Activated naive CD4-positive, alpha-beta T cell treated with anti-CD3 and anti-CD28 coated beads for 36 hours (primary cell): ENCODE measurements at regions of chr20 and their contacts with region 1.

Region 1: GRCh38 chr20:381581-382290 is 1.2 kb downstream of the TRIB3 start:
- DNase-seq: peak; percentile 81
- H3K4me3 Mint-ChIP-seq: peak overlapping the region; percentile 83
- H3K27ac Mint-ChIP-seq: peak overlapping the region; percentile 83
- H3K4me1 Mint-ChIP-seq: peaks cover 25% of the 10 kb centered on the region
- H3K27me3 Mint-ChIP-seq: no peaks in the 10 kb centered on the region

Region 2: DNA sequence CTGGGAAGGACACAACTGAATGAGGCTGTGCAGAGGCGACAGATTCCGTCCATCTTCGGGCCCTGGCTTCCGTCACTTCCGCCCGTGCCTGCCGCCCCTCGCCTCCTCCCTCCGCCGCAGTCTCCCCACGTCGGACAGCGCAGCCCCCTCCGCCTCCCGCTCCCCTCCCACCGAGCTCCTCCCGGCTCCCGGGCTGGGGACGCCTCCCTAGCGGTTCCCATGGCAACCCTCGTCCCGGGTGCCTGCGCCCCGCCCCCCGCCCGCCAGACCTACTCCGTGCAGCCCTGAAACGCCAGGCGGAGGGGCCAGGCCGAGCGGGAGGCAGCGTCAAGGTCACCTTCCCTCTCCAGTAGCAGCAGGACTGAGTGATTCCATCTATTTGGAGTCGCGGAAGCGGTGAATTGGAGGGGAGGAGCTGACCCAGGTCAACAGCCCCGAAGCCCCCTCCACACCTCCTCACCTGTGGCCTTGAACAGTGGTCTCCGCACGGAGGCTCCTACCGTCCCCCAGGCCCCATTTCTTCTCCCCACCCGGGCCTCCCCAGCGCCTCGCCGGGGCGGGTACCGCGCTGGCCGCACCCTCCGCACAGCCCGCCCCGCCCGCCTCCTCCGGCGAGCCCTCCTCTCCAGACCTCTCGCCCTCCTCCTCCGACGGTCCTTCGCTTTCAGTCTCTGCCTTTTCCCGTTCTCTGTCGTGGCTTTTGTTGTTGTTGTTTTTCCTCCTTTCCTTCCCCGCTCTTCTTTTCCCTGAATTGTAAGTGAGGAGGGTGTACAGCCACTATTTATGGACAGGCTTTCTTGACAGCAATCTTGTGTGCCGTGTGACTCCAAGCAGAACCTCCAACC is 33.9 kb before region 1 on chr20:
- CTCF ChIA-PET with region 1: no interaction called
- intact Hi-C with region 1: loop called (anchors 5 kb)
- DNase-seq: peak; percentile 57
- H3K4me3 Mint-ChIP-seq: peak overlapping the region; percentile 79
- H3K27ac Mint-ChIP-seq: no peak overlapping the region
- H3K4me1 Mint-ChIP-seq: peaks cover 9% of the 10 kb centered on the region
- H3K27me3 Mint-ChIP-seq: peaks cover 5% of the 10 kb centered on the region

Region 3: DNA sequence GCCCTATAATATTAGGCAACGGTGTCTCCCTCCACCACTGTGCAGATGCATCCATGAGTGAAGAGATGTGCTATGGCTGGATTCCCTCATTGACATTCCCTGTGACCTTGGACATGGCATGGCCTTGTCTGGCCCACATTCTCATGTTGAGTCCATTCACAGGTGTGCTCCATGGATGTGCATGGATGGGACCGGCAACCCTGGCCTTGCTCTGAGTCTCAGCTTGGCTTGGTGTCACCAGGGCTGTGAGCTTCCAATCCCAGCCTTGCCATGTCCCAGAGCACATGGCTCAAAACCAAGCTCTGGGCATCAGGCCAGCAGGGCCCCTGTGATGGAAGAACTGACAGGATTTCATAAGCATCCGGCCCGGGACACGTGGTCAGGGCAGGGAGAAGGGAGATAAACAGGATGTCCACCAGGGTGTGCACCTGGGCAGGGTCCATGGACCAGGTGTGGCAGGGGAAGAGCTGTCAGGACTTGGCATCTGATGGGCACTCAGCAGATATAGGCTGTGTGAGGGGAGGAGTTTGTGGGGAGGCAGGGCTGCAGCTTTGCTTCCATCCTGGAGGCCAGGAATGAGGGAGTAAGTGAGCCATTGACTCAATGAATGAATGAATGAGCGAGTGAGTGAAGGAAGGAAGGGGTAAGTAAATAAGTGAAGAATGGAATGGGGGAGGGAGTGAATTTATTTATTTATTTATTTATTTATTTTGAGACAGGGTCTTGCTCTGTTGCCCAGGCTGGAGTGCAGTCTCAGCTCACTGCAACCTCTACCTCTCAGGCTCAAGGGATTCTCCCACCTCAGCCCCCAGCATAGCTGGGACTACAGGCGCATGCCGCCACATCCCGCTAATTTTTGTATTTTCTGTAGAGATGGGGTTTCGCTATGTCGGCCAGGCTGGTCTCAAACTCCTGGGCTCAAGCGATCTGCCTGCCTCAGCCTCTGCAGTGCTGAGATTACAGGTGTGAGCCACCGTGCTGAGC is 19.2 kb before region 1 on chr20:
- CTCF ChIA-PET with region 1: interaction called, 4 read pairs
- intact Hi-C with region 1: loop called (anchors 2 kb)
- DNase-seq: peak; percentile 83
- H3K4me3 Mint-ChIP-seq: peak overlapping the region; percentile 26
- H3K27ac Mint-ChIP-seq: peak overlapping the region; percentile 29
- H3K4me1 Mint-ChIP-seq: peaks cover 35% of the 10 kb centered on the region
- H3K27me3 Mint-ChIP-seq: no peaks in the 10 kb centered on the region